ENCODE measurements at regions of chr6 and their contacts with region 1.

Region 1: GRCh38 chr6:150987371-150987828 is 121.9 kb downstream of the MTHFD1L start:
- DNase-seq: peak; percentile 72
- H3K4me3 Mint-ChIP-seq: peak overlapping the region; percentile 40
- H3K27ac Mint-ChIP-seq: peak overlapping the region; percentile 95
- H3K4me1 Mint-ChIP-seq: peaks cover 25% of the 10 kb centered on the region
- H3K27me3 Mint-ChIP-seq: no peaks in the 10 kb centered on the region

Region 2: DNA sequence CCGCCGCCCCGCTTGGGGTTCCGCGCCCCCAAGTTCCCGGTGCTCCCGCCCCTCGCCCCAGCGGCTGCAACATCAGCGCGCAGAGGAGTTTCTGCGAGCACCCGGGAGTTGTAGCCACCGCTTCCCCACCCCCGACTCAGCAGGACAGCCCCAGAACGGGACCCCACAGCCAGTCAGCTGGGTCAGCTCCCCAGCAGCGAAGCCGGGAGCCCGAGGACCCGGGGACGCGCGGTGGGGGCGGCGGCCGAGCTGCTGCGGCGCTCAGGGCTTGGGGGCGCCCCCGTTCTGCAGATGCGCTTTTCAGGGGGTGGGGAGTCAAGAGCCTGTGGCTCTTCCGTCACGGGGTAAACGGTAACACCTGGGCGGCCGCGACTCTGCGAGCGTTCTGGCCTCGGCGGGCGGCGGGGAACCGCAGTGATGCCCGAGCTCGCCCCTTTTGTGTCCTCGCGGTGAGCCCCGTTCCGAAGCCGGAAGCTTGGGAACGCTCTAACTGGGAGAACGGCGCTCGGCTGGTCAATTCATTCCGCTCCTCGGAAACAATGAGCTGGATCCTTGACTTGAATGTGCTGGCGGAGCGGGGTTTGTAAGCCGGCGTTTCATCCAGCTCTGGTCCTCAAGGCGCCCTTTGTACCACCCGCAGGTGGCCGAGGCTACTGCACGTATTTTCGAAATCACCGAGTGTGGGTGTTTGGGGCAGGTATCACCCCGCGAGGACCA is 386.9 kb before region 1 on chr6:
- CTCF ChIA-PET with region 1: no interaction called
- POLR2A ChIA-PET with region 1: no interaction called
- DNase-seq: peak; percentile 65
- H3K4me3 Mint-ChIP-seq: peak overlapping the region; percentile 80
- H3K27ac Mint-ChIP-seq: peak overlapping the region; percentile 40
- H3K4me1 Mint-ChIP-seq: peaks cover 16% of the 10 kb centered on the region
- H3K27me3 Mint-ChIP-seq: peaks cover 51% of the 10 kb centered on the region

Region 3: GRCh38 chr6:150999107-150999506 is 11.7 kb after region 1 on chr6:
- CTCF ChIA-PET with region 1: interaction called, 10 read pairs
- POLR2A ChIA-PET with region 1: interaction called, 12 read pairs
- DNase-seq: no peak
- H3K4me3 Mint-ChIP-seq: no peak overlapping the region
- H3K27ac Mint-ChIP-seq: no peak overlapping the region
- H3K4me1 Mint-ChIP-seq: peaks cover 6% of the 10 kb centered on the region
- H3K27me3 Mint-ChIP-seq: no peaks in the 10 kb centered on the region

Region 4: GRCh38 chr6:151004415-151005024 is 17.1 kb after region 1 on chr6:
- CTCF ChIA-PET with region 1: interaction called, 10 read pairs
- POLR2A ChIA-PET with region 1: interaction called, 12 read pairs
- DNase-seq: no peak
- H3K4me3 Mint-ChIP-seq: no peak overlapping the region
- H3K27ac Mint-ChIP-seq: peak overlapping the region; percentile 64
- H3K4me1 Mint-ChIP-seq: peaks cover 18% of the 10 kb centered on the region
- H3K27me3 Mint-ChIP-seq: no peaks in the 10 kb centered on the region